ENCODE measurements at regions of chr12 and their contacts with region 1.

Region 1: DNA sequence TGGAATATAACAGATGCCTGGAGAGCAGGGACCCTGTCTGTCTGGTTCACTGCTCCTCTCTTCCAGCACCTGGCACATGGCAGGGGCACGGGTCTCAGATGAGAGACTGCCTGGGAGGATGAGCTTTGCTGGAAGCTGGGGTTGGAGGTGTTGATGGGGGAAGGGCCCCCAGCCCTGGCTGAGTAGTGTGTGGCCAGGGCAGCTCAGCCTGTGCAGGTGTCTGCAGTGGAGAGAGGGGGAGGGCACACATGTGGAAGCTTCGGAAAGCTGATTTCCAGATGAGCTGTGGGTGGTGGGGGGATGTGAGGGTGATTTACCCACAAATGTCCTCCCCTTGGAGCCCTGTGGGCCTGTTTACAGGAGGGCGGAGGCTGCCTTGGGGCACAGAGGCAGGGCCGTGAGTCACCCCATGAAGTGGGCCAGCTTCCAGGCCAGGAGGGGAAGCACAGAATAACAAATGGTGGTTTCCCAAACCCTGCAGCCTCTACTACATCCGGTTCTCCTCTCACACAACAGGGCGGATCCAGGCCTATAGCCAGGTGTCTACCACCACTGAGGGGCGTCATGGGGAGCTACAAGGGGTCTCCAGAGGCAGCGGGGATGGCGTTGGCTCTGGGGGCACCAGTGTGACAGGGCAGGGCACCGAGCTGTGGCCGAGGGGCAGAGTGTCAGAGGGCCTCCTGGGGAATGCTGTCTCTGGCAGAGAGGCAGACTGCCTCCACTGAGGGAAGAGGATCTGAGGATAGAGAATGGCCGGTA is 11.0 kb downstream of the KRT7 start:
- DNase-seq: peak; percentile 76
- H3K4me3 Mint-ChIP-seq: peak overlapping the region; percentile 94
- H3K27ac Mint-ChIP-seq: peak overlapping the region; percentile 98
- H3K4me1 Mint-ChIP-seq: peaks cover 73% of the 10 kb centered on the region
- H3K27me3 Mint-ChIP-seq: peaks cover 4% of the 10 kb centered on the region

Region 2: GRCh38 chr12:52032804-52033502 is 211.1 kb before region 1 on chr12:
- intact Hi-C with region 1: no loop called
- DNase-seq: peak; percentile 90
- H3K4me3 Mint-ChIP-seq: peak overlapping the region; percentile 72
- H3K27ac Mint-ChIP-seq: peak overlapping the region; percentile 74
- H3K4me1 Mint-ChIP-seq: peaks cover 44% of the 10 kb centered on the region
- H3K27me3 Mint-ChIP-seq: peaks cover 15% of the 10 kb centered on the region

Region 3: GRCh38 chr12:52233462-52234141 is 10.4 kb before region 1 on chr12:
- intact Hi-C with region 1: loop called (anchors 1 kb)
- DNase-seq: no peak
- H3K4me3 Mint-ChIP-seq: peak overlapping the region; percentile 11
- H3K27ac Mint-ChIP-seq: no peak overlapping the region
- H3K4me1 Mint-ChIP-seq: peaks cover 5% of the 10 kb centered on the region
- H3K27me3 Mint-ChIP-seq: peaks cover 45% of the 10 kb centered on the region

Region 4: DNA sequence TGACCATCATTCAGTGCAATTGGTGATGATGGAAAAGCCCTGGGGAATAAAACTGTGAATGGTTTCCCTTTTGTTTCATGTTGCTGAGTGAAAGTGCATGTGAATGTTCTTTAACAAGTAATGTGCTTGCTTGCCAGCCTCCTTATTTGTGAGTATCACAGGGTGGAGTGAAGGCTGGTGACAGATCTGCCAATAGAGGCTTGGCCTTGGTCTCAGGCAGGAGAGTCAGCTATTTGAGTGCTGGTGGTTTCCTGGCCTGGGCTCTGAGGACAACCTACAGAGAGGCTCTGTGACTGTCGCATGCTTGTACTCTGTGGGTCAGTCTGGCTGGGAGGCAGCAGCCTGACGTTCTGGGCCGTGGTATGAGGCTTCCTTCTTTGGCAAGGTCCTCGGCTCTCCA is 102.6 kb after region 1 on chr12:
- intact Hi-C with region 1: no loop called
- DNase-seq: no peak
- H3K4me3 Mint-ChIP-seq: no peak overlapping the region
- H3K27ac Mint-ChIP-seq: no peak overlapping the region
- H3K4me1 Mint-ChIP-seq: peaks cover 1% of the 10 kb centered on the region
- H3K27me3 Mint-ChIP-seq: peaks cover 19% of the 10 kb centered on the region

Measured in activated T-helper 1 cell treated with anti-CD3 and anti-CD28 coated beads, Interleukin-12 subunit alpha, Interleukin-12 subunit beta, Interleukin-2, Interleukin-4 antibody, amounts not matched to agents 30 ng/mL and 10 ng/mL and 1 ng/mL, durations not matched to agents 14 hours and 24 hours and 36 hours (primary cell).